Posterior cingulate gyrus (tissue), 11 donors: ENCODE measurements at regions of chr5 and their contacts with region 1.

Region 1: DNA sequence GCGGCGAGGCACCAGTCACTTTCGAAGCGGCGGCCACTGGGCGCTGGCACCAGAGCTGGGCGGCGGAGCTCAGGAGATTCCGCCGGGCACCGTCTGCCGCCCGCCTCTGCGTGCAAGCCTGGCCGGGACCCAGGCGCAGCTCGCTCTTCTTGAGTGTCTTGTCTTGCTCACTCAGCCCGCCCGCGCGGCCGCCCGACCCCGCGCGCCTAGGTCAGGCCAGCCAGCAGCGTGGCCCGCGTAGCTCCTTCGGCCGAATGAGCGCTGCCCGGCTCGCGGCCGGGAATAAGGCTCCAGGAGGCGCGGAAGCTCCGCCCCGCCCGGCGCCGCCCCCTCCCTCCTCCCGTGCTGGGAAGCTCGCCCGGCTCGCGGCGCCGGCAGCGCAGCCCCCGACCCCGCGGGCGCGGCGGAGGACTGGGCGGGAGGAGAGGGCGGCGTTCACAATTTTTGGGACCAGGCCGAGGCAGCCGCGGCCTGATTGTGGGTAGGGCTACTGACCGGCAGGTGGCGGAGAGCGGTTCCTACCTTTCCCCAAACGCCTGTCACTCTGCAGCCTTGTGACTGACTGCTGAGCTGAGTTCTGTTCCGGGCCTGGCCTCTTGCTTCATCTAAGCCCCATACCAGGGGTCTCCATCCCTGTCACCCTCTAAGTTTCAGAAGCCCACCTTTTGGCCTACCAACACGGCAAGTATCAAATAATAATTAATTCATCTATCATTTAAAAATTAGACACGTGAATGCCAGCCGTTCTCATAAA is at the start of gene HBEGF:
- DNase-seq: peak; percentile 71 to 97 (median 81)

Region 2: DNA sequence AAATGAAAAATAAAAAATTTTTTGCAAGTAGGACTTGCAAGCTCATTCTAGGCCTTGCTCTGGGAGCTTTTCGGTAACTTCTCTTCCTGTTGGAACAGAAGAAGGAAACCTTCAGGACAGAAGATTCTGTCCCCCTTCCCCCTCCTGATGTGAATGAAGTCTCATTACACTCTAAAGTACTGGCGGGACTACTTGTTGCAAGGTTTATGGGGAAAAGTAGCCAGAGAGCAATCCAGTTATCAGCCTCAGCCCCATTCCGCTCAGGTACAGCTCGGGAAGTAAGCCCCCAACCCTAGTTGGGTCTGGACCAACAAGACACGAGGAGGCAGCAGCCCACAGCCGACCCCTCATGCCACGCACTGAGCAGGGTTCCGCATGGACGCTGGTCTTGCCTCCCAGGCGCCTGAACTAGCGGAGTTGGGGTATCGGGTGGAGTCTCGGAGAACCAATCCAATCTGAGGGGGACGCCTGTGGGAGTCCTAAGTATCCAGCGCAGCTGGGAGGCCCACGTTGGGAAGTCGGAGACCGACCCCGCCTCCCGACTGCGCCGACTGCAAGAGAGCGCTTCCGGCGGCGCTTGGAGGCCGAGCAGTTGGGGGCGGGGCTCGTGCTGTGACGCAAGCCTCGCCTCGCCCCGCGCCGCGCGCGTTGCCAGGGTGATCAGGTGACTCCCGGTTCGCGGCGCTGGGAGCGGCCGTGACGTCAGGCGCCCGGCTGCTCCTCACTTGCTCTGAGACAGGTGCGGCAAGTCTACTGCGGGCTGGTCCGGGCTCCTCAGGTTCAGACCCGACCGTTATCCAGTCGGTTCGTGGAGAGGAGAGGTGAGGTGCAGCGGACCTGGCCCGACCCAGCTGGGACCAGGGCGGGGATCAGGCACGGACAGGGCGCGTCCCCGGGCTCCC is 171.8 kb before region 1 on chr5 and contains the start of gene CYSTM1:
- intact Hi-C with region 1: loop called (anchors 10 kb)
- DNase-seq: peak; percentile 84 to 99 (median 94)

Region 3: DNA sequence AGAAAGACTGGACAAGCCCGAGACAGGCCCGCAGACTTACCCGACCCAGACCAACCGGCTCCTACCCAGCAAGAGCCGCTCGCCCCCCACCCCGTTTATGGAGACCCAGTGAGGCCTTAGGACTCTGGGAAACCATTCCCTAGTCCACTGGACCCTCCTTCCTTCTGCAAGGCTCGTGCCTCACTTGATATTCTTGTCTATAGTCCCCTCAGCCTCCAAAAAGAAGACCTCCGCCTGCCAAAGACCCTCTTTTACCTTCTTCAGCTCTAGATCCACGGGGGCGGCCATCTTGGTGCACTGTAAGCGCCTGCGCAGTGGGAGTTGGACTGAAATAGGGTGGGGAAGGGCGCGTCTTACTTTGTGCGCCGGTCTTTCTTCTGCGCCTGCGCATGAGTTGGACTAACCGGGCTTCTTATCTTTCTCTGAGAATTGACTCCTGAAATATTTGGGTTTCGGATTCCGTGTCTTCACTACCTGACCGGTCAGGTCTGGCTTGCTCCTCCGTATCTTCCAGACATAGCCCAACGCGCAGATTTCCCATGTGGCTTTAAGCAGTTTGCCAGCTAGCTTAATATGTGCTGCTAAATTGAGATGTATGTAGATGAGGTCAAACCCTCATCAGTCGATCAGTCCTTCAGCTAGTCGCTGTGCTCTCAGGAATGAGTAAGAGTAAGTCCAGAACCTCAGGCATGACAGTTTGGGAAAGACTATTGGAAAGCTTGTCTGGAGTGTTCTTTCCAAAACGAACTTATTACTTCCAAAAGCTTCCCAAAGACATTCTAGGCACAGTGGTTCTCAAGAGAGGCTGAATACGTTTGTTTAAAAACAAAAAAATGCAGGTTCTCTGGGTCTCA is 43.5 kb before region 1 on chr5 and contains the start of gene PFDN1:
- intact Hi-C with region 1: loop called (anchors 5 kb)
- DNase-seq: peak; percentile 88 to 98 (median 94)

Region 4: GRCh38 chr5:140609126-140609525 is 262.6 kb after region 1 on chr5:
- intact Hi-C with region 1: no loop called
- DNase-seq: peak in 5 of 10 donors; percentile 5 to 71 (median 39)